Sigmoid colon (tissue), 7 donors: ENCODE measurements at regions of chr11 and their contacts with region 1.

Region 1: GRCh38 chr11:65013692-65014145 is 241 bp upstream of the ARL2 start:
- DNase-seq: peak; percentile 96
- H3K4me3 ChIP-seq: peak overlapping the region; percentile 60 to 92 (median 81)
- H3K27ac ChIP-seq: peak overlapping the region; percentile 99 to 100 (median 100)
- H3K4me1 ChIP-seq: peaks cover 0 to 25% (median 19%) of the 10 kb centered on the region in 4 donors
- H3K27me3 ChIP-seq: no peaks in the 10 kb centered on the region
- CTCF ChIP-seq: peak in 3 of 4 experiments; percentile 30 to 94 (median 82)
- EP300 ChIP-seq: no peak
- POLR2A ChIP-seq: peak; percentile 40 to 53

Region 2: DNA sequence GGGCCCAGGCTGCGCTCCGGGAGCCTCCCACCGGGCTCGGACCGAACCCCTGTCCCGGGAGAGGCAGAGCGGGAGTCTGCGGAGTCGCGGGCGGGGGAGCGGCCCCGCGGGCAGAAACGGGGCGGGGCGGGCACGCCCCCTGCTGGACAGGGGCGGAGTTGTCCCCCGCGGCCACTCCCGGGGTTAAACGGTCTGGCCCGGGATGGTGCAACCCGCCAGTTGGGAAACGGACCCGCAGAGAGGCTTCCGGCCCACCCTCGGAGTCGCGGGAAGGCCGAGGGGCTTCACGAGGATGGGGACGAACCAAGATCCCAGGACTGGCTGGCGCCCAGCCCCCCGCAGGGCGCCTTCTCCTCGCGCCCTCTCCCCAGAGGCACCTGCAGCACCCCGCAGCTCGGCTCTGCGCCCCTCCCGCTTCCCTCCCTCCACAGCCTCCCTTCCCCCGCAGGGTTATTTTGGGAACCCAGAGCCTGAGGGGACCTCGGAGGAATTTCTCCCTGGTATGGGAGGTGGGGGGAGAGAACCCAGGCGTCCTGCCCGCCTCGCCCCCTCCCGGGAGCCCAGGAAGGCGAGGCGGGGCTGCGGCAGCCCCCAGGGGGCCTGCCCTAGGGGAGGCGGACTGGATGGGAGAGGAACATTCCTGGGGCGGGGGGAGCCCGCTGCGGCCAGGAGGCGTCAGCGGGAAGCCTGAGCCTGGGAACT is 270.7 kb before region 1 on chr11:
- intact Hi-C with region 1: no loop called
- DNase-seq: peak; percentile 92
- H3K4me3 ChIP-seq: peak overlapping the region; percentile 37 to 86 (median 68)
- H3K27ac ChIP-seq: peak overlapping the region; percentile 95 to 98 (median 96)
- H3K4me1 ChIP-seq: peaks cover 0 to 50% (median 45%) of the 10 kb centered on the region in 4 donors
- H3K27me3 ChIP-seq: no peaks in the 10 kb centered on the region
- CTCF ChIP-seq: peak; percentile 45 to 76 (median 62)
- EP300 ChIP-seq: no peak
- POLR2A ChIP-seq: no peak

Region 3: DNA sequence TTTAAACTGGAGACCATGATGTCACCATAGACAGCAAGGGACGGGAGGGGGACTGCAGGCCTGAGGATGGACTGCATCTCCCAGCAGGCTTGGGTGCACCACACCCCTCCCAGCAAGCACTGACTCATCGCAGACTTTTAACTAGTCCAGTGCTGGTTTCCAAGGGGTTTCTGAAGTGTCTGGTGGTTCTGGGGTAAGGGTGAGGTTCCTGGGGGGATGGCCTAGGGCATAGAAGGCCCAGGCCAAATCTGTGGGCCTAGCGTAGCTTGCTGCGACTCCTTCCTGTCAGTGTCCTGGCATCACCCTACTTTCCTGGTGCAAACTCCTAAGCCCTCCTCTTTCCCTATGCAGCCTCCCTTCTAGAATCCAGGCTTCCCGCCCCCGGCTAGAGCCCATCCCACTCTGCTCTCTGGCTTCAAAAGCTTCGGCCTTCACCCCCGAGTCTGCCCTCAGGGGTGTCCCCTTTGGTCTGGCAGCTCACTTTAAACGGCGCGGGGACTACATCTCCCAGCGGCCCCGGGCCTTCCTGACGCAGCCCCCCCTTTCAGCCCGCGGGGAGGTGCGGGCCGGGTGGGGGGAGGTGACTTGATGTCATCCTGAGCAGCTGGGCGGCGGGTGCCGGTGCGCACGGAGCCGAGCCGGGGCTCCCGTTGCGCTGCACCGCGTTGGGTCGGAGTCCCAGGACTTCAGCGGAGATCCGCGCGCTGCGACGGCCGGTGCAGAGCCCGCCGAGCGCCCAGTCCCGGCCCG is 89.4 kb before region 1 on chr11 and contains the start of gene PPP2R5B:
- intact Hi-C with region 1: loop called (anchors 1 kb)
- DNase-seq: peak; percentile 98
- H3K4me3 ChIP-seq: peak within 1 kb of the TSS; percentile 64 to 93 (median 84)
- H3K27ac ChIP-seq: peak within 1 kb of the TSS; percentile 89 to 97 (median 94)
- H3K4me1 ChIP-seq: peaks cover 0 to 23% (median 22%) of the 10 kb centered on the region in 4 donors
- H3K27me3 ChIP-seq: no peaks in the 10 kb centered on the region
- CTCF ChIP-seq: no peak
- EP300 ChIP-seq: peak in 1 of 4 donors; percentile 49
- POLR2A ChIP-seq: peak; percentile 67 to 81
- total RNA-seq, gene PPP2R5B: 17.8 to 27.3 (median 21.3) TPM

Region 4: GRCh38 chr11:65083834-65084597 is 70.3 kb after region 1 on chr11 and contains the starts of genes CDCA5 and ZFPL1:
- intact Hi-C with region 1: loop called (anchors 2 kb)
- DNase-seq: peak; percentile 97
- H3K4me3 ChIP-seq: peak within 1 kb of the TSS; percentile 78 to 84 (median 82)
- H3K27ac ChIP-seq: peak within 1 kb of the TSS; percentile 88 to 95 (median 92)
- H3K4me1 ChIP-seq: peaks cover 0 to 23% (median 20%) of the 10 kb centered on the region in 4 donors
- H3K27me3 ChIP-seq: no peaks in the 10 kb centered on the region
- CTCF ChIP-seq: no peak
- EP300 ChIP-seq: peak in 2 of 4 donors; percentile 33 to 82
- POLR2A ChIP-seq: peak in 1 of 2 donors; percentile 48
- total RNA-seq, gene CDCA5: 0.33 to 7.5 (median 3.3) TPM in 3 of 4 donors, not detected in the other
- total RNA-seq, gene ZFPL1: 26.1 to 38.8 (median 36.9) TPM

Region 5: DNA sequence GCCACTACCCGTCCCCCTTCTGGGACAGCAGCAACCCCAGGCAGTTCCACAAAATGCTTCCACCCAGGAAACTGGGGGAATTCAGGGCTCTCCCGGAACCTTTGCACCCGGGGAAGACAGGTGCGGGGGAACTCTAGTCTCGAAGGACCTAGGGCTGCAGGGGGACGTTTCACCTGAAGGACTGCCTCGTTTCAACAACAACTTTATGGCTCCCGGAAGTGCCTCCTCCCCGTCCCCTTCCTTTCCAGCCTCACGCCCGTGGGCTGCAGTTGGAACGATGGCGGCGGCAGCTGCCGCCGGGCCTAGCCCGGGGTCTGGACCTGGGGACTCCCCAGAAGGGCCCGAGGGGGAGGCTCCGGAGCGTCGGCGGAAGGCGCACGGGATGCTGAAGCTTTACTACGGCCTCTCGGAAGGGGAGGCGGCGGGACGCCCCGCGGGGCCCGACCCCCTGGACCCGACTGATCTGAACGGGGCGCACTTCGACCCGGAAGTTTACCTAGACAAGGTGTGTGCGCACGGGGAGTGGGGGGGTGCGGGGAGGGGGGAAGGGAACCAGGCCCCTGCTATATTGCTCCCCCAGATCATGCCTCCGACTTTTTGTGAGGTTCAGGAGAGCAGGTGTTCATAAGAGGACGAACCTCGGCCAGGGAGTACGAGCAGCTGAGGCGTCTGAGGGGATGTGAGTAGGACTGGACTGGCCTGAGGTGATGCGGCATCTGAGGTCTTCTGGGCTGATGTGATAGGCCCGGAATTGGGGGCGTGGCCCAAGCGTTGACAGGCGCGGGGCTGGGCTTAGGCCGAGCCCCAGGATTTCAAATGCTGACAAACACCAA is 82.5 kb after region 1 on chr11 and contains the start of gene VPS51:
- intact Hi-C with region 1: loop called (anchors 5 kb)
- DNase-seq: peak; percentile 95
- H3K4me3 ChIP-seq: peak within 1 kb of the TSS; percentile 84 to 97 (median 91)
- H3K27ac ChIP-seq: peak within 1 kb of the TSS; percentile 90 to 95 (median 93)
- H3K4me1 ChIP-seq: peaks cover 0 to 16% (median 13%) of the 10 kb centered on the region in 4 donors
- H3K27me3 ChIP-seq: no peaks in the 10 kb centered on the region
- CTCF ChIP-seq: no peak
- EP300 ChIP-seq: peak in 2 of 4 donors; percentile 30 to 44
- POLR2A ChIP-seq: peak; percentile 35 to 41
- total RNA-seq, gene VPS51: 211 to 752 (median 281) TPM